PC-9 (cell line): ENCODE measurements at regions of chr2 and their contacts with region 1.

Region 1: GRCh38 chr2:205766779-205767359 is 84.6 kb downstream of the NRP2 start:
- DNase-seq: peak; percentile 37 to 45
- H3K4me3 ChIP-seq: no peak overlapping the region
- H3K27ac ChIP-seq: no peak overlapping the region
- H3K4me1 ChIP-seq: no peaks in the 10 kb centered on the region
- H3K27me3 ChIP-seq: no peaks in the 10 kb centered on the region
- CTCF ChIP-seq: peak; percentile 82

Region 2: GRCh38 chr2:205640716-205641115 is 126.2 kb before region 1 on chr2:
- CTCF ChIA-PET with region 1: no interaction called
- POLR2A ChIA-PET with region 1: no interaction called
- intact Hi-C with region 1: no loop called
- DNase-seq: no peak
- H3K4me3 ChIP-seq: no peak overlapping the region
- H3K27ac ChIP-seq: no peak overlapping the region
- H3K4me1 ChIP-seq: no peaks in the 10 kb centered on the region
- H3K27me3 ChIP-seq: no peaks in the 10 kb centered on the region
- CTCF ChIP-seq: no peak

Region 3: DNA sequence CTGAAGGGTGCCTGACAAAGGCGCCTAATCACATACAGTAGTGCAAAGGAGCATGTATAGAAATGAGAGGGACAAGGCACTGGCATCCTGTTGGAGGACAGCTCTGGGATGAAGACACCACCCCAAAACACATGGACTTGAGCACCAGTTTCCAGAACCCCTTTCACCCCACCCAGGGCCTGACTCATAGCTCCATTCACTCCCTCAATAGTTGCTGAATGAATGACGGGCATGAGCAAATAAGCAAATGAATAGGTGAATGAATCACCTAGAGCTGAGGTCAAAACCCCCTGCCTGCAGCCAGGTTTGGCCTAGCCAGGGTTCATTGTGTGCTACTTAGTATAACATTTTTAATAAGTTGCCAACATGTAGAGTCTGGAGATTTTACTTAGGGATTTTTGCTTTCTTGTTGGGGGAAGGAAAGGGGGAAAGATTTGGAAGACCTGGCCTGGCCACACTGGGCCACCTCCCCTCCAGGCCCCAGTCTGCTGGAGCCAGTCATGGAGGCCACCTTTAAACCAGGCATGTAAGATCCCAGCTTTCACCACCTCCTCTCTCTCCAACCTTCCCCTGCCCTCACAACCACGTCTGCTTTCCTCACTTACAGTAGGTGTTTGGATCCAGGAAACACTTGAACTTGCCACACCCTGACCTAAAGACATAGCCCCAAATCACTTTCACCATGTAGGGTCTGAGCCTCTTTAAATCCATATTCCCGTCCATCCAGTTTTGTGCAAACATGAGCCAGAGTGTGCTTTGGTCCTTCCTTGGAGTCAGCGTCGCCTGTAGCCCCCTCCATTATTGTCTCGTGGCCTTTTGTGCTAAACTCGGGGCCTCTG is 18.0 kb before region 1 on chr2:
- CTCF ChIA-PET with region 1: no interaction called
- POLR2A ChIA-PET with region 1: no interaction called
- intact Hi-C with region 1: loop called (anchors 1 kb)
- DNase-seq: peak; percentile 65 to 93
- H3K4me3 ChIP-seq: peak overlapping the region; percentile 12; the same call in 1 of the 2 replicates
- H3K27ac ChIP-seq: peak overlapping the region; percentile 95
- H3K4me1 ChIP-seq: peaks cover 87% of the 10 kb centered on the region
- H3K27me3 ChIP-seq: no peaks in the 10 kb centered on the region
- CTCF ChIP-seq: no peak

Region 4: DNA sequence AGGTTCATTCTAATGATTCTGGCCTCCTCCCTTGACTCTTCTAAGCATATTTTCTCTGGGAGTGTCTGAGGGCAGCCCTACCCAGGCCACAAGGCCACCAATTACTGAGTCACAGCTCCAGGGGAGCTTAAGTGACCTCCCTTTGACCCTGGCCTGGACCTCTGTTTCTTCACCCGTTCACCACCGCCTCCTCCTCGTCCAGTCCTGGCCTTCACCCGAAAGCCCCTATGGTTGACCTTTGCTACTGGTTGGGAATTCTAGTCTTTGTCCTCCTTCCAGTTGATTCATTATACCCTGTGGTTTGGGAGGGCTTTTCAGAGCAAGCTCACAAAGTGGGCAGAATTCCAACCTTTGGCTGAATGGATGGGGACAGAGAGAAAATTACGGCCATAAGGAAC is 11.9 kb before region 1 on chr2:
- CTCF ChIA-PET with region 1: no interaction called
- POLR2A ChIA-PET with region 1: no interaction called
- intact Hi-C with region 1: loop called (anchors 1 kb)
- DNase-seq: peak; percentile 83 to 92
- H3K4me3 ChIP-seq: peak overlapping the region; percentile 8; the same call in 1 of the 2 replicates
- H3K27ac ChIP-seq: peak overlapping the region; percentile 95
- H3K4me1 ChIP-seq: peaks cover 91% of the 10 kb centered on the region
- H3K27me3 ChIP-seq: no peaks in the 10 kb centered on the region
- CTCF ChIP-seq: no peak

Region 5: GRCh38 chr2:205885492-205886099 is 118.7 kb after region 1 on chr2:
- CTCF ChIA-PET with region 1: no interaction called
- POLR2A ChIA-PET with region 1: no interaction called
- intact Hi-C with region 1: loop called (anchors 2 kb)
- DNase-seq: peak; percentile 48 to 52
- H3K4me3 ChIP-seq: no peak overlapping the region
- H3K27ac ChIP-seq: no peak overlapping the region
- H3K4me1 ChIP-seq: no peaks in the 10 kb centered on the region
- H3K27me3 ChIP-seq: no peaks in the 10 kb centered on the region
- CTCF ChIP-seq: peak; percentile 84

Region 6: DNA sequence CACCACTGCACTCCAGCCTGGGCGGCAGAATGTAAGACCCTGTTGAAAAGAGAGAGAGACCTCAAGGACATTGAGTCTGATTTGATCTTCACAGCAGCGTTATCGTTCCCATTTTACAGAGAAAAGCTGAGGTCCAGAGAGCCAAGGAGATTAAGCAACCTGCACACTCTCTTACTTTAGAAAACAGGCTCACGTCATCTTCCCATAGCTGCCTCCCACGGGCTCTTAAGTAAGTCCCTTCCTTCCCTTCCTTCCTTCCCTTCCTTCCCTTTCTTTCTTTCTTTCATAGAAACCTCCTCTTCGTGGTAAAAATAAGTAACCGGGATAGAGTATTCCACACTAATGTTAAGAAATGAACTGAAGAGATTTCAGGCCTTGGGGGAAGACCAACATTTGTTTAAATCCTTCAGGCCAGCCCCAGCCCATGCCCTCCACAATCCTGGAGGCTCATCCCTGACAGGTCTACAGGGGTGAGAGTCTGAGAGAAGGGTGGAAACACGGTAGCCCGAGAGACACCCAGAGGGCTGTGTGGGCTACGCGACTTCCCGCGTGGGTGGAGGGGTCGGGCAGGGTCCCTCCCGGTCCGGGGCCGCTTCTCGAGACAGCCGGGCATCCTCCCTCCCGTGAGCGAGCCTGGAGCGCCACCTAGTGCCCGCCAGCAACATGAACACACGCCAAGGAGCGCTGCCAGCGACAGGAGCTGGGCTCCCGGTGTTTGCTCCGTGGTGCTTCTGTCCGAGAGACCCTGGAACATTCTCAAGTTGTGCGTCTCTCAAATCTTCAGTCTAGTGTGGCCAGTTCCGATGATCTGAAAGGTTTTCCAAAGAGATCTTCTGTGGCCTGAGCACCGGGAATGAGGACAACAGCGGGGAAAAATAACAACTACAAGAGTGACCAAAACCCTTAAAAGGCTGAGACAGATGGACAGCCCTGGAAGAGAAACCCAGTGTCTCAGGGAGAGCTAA is 158.8 kb after region 1 on chr2:
- CTCF ChIA-PET with region 1: no interaction called
- POLR2A ChIA-PET with region 1: no interaction called
- intact Hi-C with region 1: loop called (anchors 2 kb)
- DNase-seq: peak in 1 of 2 experiments; percentile 50
- H3K4me3 ChIP-seq: peak overlapping the region; percentile 43; the same call in 1 of the 2 replicates
- H3K27ac ChIP-seq: no peak overlapping the region
- H3K4me1 ChIP-seq: 0 out of 2 replicates have a peak, but pooled peaks cover 4% of the 10 kb centered on the region
- H3K27me3 ChIP-seq: peaks cover 12% of the 10 kb centered on the region
- CTCF ChIP-seq: peak; percentile 90